ENCODE measurements at regions of chr20 and their contacts with region 1.

Region 1: DNA sequence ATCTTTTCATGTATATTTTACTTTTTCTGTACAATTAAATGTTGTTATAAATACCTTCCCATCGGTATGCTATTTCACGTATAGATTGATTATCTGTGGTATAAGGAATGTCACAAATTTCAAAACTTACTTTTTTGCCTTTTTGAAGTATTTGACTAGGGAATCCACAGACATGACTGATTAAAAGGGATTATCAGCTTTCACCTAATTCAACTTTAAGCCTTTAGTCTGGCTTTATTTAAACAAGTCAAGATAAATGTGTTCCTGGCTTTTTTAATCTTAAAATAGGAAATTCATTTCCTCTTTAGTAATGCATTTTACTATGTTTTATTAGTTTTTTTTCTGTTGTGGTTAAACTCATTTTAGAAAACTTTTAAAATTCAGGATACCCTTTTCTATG is 160.0 kb downstream of the MACROD2 start:
- DNase-seq: no peak
- H3K4me3 ChIP-seq: no peak overlapping the region
- H3K4me3 Mint-ChIP-seq: no peak overlapping the region
- H3K27ac ChIP-seq: no peak overlapping the region
- H3K27ac Mint-ChIP-seq: no peak overlapping the region
- H3K4me1 ChIP-seq: no peaks in the 10 kb centered on the region
- H3K4me1 Mint-ChIP-seq: no peaks in the 10 kb centered on the region
- H3K27me3 ChIP-seq: no peaks in the 10 kb centered on the region
- H3K27me3 Mint-ChIP-seq: no peaks in the 10 kb centered on the region
- CTCF ChIP-seq: no peak

Region 2: GRCh38 chr20:14113416-14113815 is 41.9 kb before region 1 on chr20:
- intact Hi-C with region 1: loop called in 1 of 2 experiments (anchors 10 kb)
- DNase-seq: no peak
- H3K4me3 ChIP-seq: no peak overlapping the region
- H3K4me3 Mint-ChIP-seq: no peak overlapping the region
- H3K27ac ChIP-seq: no peak overlapping the region
- H3K27ac Mint-ChIP-seq: no peak overlapping the region
- H3K4me1 ChIP-seq: no peaks in the 10 kb centered on the region
- H3K4me1 Mint-ChIP-seq: no peaks in the 10 kb centered on the region
- H3K27me3 ChIP-seq: no peaks in the 10 kb centered on the region
- H3K27me3 Mint-ChIP-seq: peaks cover 0 to 2% (median 0%) of the 10 kb centered on the region in 3 donors
- CTCF ChIP-seq: no peak

Region 3: DNA sequence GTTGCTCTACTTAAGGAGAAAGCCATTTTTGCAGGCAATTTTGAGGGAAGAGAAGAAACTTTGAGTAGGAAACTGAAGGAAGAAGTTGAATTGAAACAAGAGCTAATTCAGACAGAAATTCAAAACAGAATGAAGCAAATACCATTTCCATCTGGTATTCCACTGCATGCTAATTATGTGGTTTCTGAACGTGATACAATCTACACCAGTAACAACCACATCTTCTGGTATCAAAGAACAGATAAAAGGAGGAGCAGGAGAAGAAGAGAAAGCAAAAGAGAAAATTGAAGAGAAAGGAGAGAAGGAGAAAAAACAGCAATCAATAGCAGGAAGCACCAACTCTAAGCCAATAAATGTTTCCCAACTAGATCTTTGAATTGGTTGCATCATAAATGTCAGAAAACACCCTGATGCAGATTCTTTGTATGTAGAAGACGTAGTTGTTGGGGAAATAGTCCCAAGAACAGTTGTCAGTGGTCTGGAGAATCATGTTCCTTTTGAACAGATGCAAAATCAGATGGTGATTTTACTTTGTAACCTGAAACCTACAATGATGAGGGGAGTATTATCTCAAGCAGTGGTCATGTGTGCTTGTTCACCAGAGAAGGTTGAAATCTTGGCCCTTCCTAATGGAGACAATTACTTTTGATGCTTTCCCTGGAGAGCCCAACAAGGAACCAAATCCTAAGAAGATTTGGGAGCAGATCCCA is 27.7 kb before region 1 on chr20:
- intact Hi-C with region 1: no loop called
- DNase-seq: no peak
- H3K4me3 ChIP-seq: no peak overlapping the region
- H3K4me3 Mint-ChIP-seq: no peak overlapping the region
- H3K27ac ChIP-seq: no peak overlapping the region
- H3K27ac Mint-ChIP-seq: no peak overlapping the region
- H3K4me1 ChIP-seq: no peaks in the 10 kb centered on the region
- H3K4me1 Mint-ChIP-seq: no peaks in the 10 kb centered on the region
- H3K27me3 ChIP-seq: no peaks in the 10 kb centered on the region
- H3K27me3 Mint-ChIP-seq: peaks cover 0 to 2% (median 0%) of the 10 kb centered on the region in 3 donors
- CTCF ChIP-seq: no peak

Region 4: DNA sequence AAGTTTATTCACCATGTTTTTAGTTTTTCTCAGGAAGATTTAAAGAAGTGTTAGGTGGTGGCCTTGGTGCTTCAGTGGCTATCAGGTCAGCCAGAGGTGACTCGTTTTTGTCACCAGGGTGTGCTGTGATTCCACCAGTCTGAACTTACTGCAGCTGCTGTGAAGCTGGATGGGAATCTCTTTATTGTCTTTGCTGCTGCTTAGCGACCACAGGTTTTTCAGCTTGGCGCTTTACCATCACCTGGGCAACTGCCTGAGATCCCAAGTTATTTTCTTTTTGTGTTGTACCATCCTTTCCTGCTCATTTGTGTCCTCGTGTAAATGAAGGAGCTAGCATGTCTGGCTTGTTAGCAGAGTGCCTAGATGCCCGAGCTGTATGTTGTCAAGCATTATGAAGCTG is 13.2 kb before region 1 on chr20:
- intact Hi-C with region 1: no loop called
- DNase-seq: no peak
- H3K4me3 ChIP-seq: no peak overlapping the region
- H3K4me3 Mint-ChIP-seq: no peak overlapping the region
- H3K27ac ChIP-seq: no peak overlapping the region
- H3K27ac Mint-ChIP-seq: no peak overlapping the region
- H3K4me1 ChIP-seq: no peaks in the 10 kb centered on the region
- H3K4me1 Mint-ChIP-seq: no peaks in the 10 kb centered on the region
- H3K27me3 ChIP-seq: no peaks in the 10 kb centered on the region
- H3K27me3 Mint-ChIP-seq: peaks cover 0 to 2% (median 0%) of the 10 kb centered on the region in 3 donors
- CTCF ChIP-seq: no peak

Measured in CD14-positive monocyte (primary cell).